CD8-positive, alpha-beta T cell (primary cell): ENCODE measurements at regions of chr6 and their contacts with region 1.

Region 1: DNA sequence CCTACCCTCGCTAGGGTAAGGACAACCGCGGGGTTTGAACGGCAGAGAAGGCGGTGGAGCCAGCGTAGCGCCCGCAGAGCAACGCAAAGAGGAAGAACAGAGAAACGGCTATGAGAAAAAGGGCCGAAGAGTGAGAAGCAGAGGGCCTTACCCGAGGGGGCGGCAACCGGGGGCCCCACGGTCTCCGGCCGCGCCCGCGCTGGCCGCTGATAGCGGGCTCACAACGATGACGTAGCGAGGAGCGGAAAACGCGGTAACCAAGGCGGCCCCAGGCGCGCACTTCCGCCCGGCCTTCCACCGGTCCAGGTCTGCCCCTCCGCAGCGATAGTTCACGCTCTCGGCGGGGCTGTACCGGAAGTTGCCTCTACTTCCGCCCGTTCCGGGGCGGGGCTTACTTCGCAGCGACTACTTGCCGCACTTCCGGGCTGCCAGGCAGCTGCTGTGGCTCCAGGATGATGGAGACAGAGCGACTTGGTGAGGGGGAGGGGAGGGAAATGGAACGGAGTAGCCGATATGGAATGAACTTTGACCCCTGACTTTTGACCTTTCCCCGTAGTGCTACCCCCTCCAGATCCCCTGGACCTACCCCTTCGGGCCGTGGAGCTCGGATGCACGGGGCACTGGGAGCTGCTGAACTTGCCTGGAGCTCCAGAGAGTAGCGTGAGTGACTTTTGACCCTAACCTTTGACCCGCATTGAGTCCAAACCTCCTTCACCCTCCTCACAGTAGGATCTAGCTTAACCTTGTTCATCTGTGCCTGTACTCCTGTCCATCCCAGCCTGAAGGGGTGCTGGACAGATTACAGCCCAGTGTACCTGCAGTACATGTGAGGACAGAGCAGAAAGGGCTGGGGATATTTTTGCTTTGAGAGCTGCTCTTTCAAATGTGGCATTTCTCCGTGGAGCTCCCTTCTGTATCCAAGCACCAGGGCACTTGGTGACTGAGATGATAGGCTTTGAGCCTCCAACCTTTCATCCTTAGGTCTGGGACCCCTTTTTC is at the starts of genes NELFE and SKIC2:
- DNase-seq: peak; percentile 97 to 99 (median 99)
- ATAC-seq: peak; percentile 98
- H3K4me3 ChIP-seq: peak within 1 kb of the TSS; percentile 85 to 91
- H3K4me3 Mint-ChIP-seq: peak within 1 kb of the TSS; percentile 95
- H3K27ac ChIP-seq: peak within 1 kb of the TSS; percentile 97 to 99
- H3K27ac Mint-ChIP-seq: peak within 1 kb of the TSS; percentile 97
- H3K4me1 ChIP-seq: peaks cover 25% of the 10 kb centered on the region
- H3K4me1 Mint-ChIP-seq: peaks cover 39% of the 10 kb centered on the region
- H3K27me3 ChIP-seq: no peaks in the 10 kb centered on the region
- H3K27me3 Mint-ChIP-seq: no peaks in the 10 kb centered on the region
- CTCF ChIP-seq: no peak
- total RNA-seq, gene NELFE: 50.4 to 55.1 TPM
- total RNA-seq, gene SKIC2: 107 to 115 TPM

Region 2: DNA sequence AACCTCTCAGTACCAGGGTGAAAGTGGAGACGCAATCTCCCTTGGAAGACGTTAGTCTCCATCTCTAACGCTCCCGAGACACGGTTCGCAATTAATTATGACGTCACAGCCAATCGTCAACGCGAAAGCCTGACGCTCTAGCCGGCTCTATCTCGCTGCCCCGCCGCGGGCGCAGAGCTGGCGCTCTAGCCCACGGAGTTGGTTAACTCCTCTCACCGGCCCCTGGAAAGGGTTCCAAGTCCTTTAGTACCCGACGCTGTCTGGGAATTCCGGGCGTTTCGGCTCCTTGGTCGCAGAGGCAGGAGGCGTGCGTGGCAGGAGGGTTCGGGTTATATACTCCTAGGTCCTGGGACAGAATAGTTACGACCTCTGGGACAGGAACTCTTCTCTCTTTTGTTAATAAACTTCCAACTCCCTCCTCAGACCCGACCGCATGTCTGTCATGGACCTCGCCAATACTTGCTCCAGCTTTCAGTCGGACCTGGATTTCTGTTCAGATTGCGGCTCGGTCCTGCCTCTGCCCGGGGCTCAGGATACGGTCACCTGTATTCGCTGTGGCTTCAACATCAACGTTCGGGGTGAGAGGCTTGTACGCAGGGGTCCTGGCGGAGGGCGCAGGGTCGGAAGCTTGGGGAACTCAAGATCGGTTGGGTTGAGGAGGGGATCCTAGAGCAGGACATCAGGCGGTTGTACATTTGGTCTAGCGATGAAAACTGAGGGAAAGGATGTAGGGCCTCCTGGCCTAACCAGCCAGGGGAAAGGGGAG is 1897.8 kb before region 1 on chr6 and contains the start of gene POLR1H:
- CTCF ChIA-PET with region 1: no interaction called
- POLR2A ChIA-PET with region 1: no interaction called
- intact Hi-C with region 1: loop called in 1 of 2 experiments (anchors 5 kb)
- DNase-seq: peak; percentile 68 to 96 (median 87)
- ATAC-seq: peak; percentile 87
- H3K4me3 ChIP-seq: peak within 1 kb of the TSS; percentile 82 to 87
- H3K4me3 Mint-ChIP-seq: peak within 1 kb of the TSS; percentile 97
- H3K27ac ChIP-seq: peak within 1 kb of the TSS; percentile 89 to 93
- H3K27ac Mint-ChIP-seq: peak within 1 kb of the TSS; percentile 99
- H3K4me1 ChIP-seq: peaks cover 29% of the 10 kb centered on the region
- H3K4me1 Mint-ChIP-seq: peaks cover 56% of the 10 kb centered on the region
- H3K27me3 ChIP-seq: no peaks in the 10 kb centered on the region
- H3K27me3 Mint-ChIP-seq: no peaks in the 10 kb centered on the region
- CTCF ChIP-seq: no peak
- total RNA-seq, gene POLR1H: 26.6 to 30.7 TPM

Region 3: DNA sequence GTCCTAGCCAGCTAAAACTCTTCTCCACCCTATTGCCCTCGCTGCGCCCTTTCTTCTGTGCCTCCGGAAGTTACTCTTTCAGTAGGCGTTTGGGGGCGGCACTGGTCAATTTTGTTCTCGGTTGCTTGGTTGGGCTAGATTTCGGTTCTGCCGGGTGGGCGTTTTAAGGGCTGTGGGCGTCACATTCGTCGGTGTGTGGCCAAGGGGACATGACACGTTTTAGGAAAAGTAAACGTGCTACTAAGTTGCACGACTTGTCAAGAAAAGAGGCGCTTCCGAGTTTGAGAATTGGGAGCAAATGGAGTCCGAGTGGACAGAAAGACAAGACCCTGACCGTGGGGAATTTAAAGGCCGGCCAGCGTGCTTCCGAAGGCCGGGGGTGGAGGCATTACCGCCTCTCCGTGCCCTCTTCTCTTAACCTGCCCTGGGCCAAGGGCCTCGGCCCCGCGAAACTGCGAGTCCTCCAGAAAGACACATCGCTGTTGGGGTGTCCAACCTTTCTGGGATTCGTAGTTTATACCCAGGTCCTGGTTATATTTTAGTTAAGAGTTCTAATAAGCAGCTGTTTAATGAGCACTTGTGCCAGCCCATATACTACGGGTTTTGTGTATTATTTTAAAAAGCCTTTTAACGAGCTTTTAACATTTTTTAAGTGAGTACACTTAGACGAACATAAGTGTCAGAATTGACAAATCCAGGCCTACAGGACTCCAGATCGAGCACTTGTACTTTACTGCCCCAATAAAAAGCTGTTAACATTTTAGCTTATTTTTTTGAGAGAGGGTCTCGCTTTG is 305.9 kb before region 1 on chr6:
- CTCF ChIA-PET with region 1: no interaction called
- POLR2A ChIA-PET with region 1: no interaction called
- intact Hi-C with region 1: loop called in 1 of 2 experiments (anchors 5 kb)
- DNase-seq: peak in 4 of 9 experiments; percentile 77 to 92 (median 88)
- ATAC-seq: peak; percentile 70
- H3K4me3 ChIP-seq: peak overlapping the region; percentile 78 to 82
- H3K4me3 Mint-ChIP-seq: peak overlapping the region; percentile 92
- H3K27ac ChIP-seq: peak overlapping the region; percentile 94 to 96
- H3K27ac Mint-ChIP-seq: peak overlapping the region; percentile 100
- H3K4me1 ChIP-seq: peaks cover 32% of the 10 kb centered on the region
- H3K4me1 Mint-ChIP-seq: peaks cover 59% of the 10 kb centered on the region
- H3K27me3 ChIP-seq: no peaks in the 10 kb centered on the region
- H3K27me3 Mint-ChIP-seq: no peaks in the 10 kb centered on the region
- CTCF ChIP-seq: no peak

Region 4: GRCh38 chr6:31806465-31807272 is 152.4 kb before region 1 on chr6 and contains the start of gene LSM2:
- CTCF ChIA-PET with region 1: no interaction called
- POLR2A ChIA-PET with region 1: no interaction called
- intact Hi-C with region 1: loop called in 1 of 2 experiments (anchors 1 kb)
- DNase-seq: peak; percentile 92 to 99 (median 97)
- ATAC-seq: peak; percentile 99
- H3K4me3 ChIP-seq: peak within 1 kb of the TSS; percentile 61 to 95
- H3K4me3 Mint-ChIP-seq: peak within 1 kb of the TSS; percentile 87
- H3K27ac ChIP-seq: peak within 1 kb of the TSS; percentile 78 to 82
- H3K27ac Mint-ChIP-seq: peak within 1 kb of the TSS; percentile 94
- H3K4me1 ChIP-seq: peaks cover 8% of the 10 kb centered on the region
- H3K4me1 Mint-ChIP-seq: peaks cover 25% of the 10 kb centered on the region
- H3K27me3 ChIP-seq: no peaks in the 10 kb centered on the region
- H3K27me3 Mint-ChIP-seq: no peaks in the 10 kb centered on the region
- CTCF ChIP-seq: no peak
- total RNA-seq, gene LSM2: 19.6 to 26.4 TPM

Region 5: DNA sequence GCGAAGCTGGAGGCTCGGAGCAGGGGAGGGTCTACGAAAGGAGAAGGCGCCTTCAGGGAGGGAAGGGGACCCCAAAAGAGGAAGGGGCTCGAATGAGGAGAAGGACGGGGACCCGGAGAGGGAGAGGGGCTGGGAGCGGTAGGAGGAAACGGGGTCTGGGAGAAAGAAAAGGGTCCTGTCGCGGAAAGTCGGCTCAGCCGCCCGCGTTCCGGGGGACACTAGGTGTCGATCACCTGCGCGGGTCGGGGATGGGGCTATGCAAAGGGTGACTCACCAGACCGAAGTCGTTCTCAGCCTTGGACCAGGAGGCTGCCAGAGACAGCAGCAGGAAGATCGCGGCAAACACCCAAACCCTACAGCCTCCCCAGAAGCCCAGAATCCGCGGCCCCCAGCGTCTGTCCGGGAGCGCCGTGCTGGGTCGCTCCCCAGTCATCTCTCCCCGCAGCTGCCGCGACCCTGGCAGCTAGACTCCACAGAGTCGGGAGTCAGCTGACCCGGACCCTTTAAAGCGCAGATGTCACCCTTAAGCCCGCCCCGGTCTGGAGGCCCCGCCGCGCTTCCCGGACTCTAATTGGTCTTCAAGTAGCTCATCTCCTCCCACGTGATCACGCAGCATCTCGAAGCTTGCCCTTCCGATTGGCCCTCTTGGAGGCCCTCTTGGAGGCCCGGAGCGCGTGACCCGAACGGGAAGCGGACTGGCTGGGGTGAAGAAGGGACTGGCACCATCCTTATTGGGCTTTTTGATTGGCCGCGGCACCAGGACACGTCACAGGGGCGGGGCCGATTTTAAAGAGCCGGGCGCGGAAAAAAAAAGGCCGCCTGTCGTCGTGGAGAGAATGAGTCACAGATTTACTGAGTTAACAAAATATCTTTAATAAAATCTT is 96.5 kb before region 1 on chr6 and contains the start of gene NEU1:
- CTCF ChIA-PET with region 1: no interaction called
- POLR2A ChIA-PET with region 1: no interaction called
- intact Hi-C with region 1: loop called in 1 of 2 experiments (anchors 1 kb)
- DNase-seq: peak; percentile 97 to 100 (median 98)
- ATAC-seq: peak; percentile 91
- H3K4me3 ChIP-seq: peak within 1 kb of the TSS; percentile 75 to 94
- H3K4me3 Mint-ChIP-seq: peak within 1 kb of the TSS; percentile 95
- H3K27ac ChIP-seq: peak within 1 kb of the TSS; percentile 77 to 97
- H3K27ac Mint-ChIP-seq: peak within 1 kb of the TSS; percentile 98
- H3K4me1 ChIP-seq: peaks cover 17% of the 10 kb centered on the region
- H3K4me1 Mint-ChIP-seq: peaks cover 23% of the 10 kb centered on the region
- H3K27me3 ChIP-seq: no peaks in the 10 kb centered on the region
- H3K27me3 Mint-ChIP-seq: no peaks in the 10 kb centered on the region
- CTCF ChIP-seq: no peak
- total RNA-seq, gene NEU1: 30.0 to 30.2 TPM

Region 6: GRCh38 chr6:31922942-31923341 is 36.1 kb before region 1 on chr6:
- CTCF ChIA-PET with region 1: no interaction called
- POLR2A ChIA-PET with region 1: no interaction called
- intact Hi-C with region 1: no loop called
- DNase-seq: peak in 6 of 9 experiments; percentile 11 to 50 (median 30)
- ATAC-seq: no peak
- H3K4me3 ChIP-seq: no peak overlapping the region
- H3K4me3 Mint-ChIP-seq: no peak overlapping the region
- H3K27ac ChIP-seq: no peak overlapping the region
- H3K27ac Mint-ChIP-seq: no peak overlapping the region
- H3K4me1 ChIP-seq: no peaks in the 10 kb centered on the region
- H3K4me1 Mint-ChIP-seq: no peaks in the 10 kb centered on the region
- H3K27me3 ChIP-seq: no peaks in the 10 kb centered on the region
- H3K27me3 Mint-ChIP-seq: no peaks in the 10 kb centered on the region
- CTCF ChIP-seq: no peak

Region 7: DNA sequence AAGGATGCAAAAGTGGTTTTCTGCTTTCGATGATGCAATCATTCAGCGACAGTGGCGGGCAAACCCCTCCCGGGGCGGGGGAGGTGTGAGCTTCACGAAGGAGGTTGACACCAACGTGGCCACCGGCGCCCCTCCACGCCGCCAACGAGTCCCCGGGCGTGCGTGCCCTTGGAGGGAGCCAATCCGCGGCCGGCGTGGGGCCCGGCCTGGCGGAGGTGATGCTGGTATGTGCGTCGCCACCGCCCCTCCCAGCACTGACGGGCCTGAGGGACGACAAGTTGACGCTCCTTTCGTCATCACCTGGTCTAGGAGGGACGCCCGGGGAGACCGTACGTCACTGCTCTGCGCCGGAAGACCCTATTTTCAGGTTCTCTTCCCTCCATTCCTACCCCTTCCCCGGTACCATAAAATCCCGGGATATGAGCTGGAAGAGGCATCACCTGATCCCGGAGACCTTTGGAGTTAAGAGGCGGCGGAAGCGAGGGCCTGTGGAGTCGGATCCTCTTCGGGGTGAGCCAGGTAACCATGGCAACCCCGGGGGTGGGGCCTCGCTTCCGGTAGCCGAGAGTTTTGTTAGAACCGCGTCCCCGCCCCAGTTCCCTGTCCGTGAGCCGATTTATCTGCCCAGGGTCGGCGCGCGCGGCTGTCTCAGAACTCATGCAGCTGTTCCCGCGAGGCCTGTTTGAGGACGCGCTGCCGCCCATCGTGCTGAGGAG is 13.1 kb after region 1 on chr6 and contains the start of gene DXO:
- CTCF ChIA-PET with region 1: interaction called, 14 read pairs
- POLR2A ChIA-PET with region 1: interaction called, 74 read pairs
- intact Hi-C with region 1: loop called (anchors 1 kb)
- DNase-seq: peak; percentile 91 to 100 (median 97)
- ATAC-seq: peak; percentile 93
- H3K4me3 ChIP-seq: peak within 1 kb of the TSS; percentile 66 to 90
- H3K4me3 Mint-ChIP-seq: peak within 1 kb of the TSS; percentile 96
- H3K27ac ChIP-seq: peak within 1 kb of the TSS; percentile 98 to 99
- H3K27ac Mint-ChIP-seq: peak within 1 kb of the TSS; percentile 100
- H3K4me1 ChIP-seq: peaks cover 22% of the 10 kb centered on the region
- H3K4me1 Mint-ChIP-seq: peaks cover 37% of the 10 kb centered on the region
- H3K27me3 ChIP-seq: no peaks in the 10 kb centered on the region
- H3K27me3 Mint-ChIP-seq: no peaks in the 10 kb centered on the region
- CTCF ChIP-seq: no peak
- total RNA-seq, gene DXO: 20.8 to 22.2 TPM

Region 8: DNA sequence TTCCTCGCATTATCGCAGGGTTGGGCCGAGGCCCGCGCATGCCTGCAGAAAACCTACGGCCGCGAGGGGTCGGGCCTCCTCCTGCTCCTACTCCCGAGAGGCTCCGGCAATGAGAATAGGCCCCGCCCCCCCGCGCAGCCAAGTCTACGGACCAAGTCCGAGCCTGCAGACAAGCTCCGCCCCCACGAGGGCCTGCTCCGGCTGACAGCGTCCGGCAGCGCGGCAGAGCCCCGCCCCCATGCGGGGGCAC is 236.5 kb after region 1 on chr6:
- CTCF ChIA-PET with region 1: no interaction called
- POLR2A ChIA-PET with region 1: no interaction called
- intact Hi-C with region 1: loop called (anchors 2 to 5 kb)
- DNase-seq: peak; percentile 99 to 100 (median 100)
- ATAC-seq: peak; percentile 80
- H3K4me3 ChIP-seq: peak overlapping the region; percentile 85 to 87
- H3K4me3 Mint-ChIP-seq: peak overlapping the region; percentile 90
- H3K27ac ChIP-seq: peak overlapping the region; percentile 94 to 97
- H3K27ac Mint-ChIP-seq: peak overlapping the region; percentile 95
- H3K4me1 ChIP-seq: peaks cover 33% of the 10 kb centered on the region
- H3K4me1 Mint-ChIP-seq: peaks cover 35% of the 10 kb centered on the region
- H3K27me3 ChIP-seq: no peaks in the 10 kb centered on the region
- H3K27me3 Mint-ChIP-seq: no peaks in the 10 kb centered on the region
- CTCF ChIP-seq: peak; percentile 10